ENCODE measurements at regions of chr5 and their contacts with region 1.

Region 1: GRCh38 chr5:149990518-149991376 is 9.7 kb downstream of the TIGD6 start:
- DNase-seq: peak; percentile 81 to 82
- ATAC-seq: peak; percentile 87 to 93
- H3K4me3 ChIP-seq: no peak overlapping the region
- H3K27ac ChIP-seq: no peak overlapping the region
- H3K4me1 ChIP-seq: no peaks in the 10 kb centered on the region
- CTCF ChIP-seq: peak; percentile 98
- EP300 ChIP-seq: no peak
- POLR2A ChIP-seq: no peak
- RAD21 ChIP-seq: peak; percentile 93 to 99

Region 2: DNA sequence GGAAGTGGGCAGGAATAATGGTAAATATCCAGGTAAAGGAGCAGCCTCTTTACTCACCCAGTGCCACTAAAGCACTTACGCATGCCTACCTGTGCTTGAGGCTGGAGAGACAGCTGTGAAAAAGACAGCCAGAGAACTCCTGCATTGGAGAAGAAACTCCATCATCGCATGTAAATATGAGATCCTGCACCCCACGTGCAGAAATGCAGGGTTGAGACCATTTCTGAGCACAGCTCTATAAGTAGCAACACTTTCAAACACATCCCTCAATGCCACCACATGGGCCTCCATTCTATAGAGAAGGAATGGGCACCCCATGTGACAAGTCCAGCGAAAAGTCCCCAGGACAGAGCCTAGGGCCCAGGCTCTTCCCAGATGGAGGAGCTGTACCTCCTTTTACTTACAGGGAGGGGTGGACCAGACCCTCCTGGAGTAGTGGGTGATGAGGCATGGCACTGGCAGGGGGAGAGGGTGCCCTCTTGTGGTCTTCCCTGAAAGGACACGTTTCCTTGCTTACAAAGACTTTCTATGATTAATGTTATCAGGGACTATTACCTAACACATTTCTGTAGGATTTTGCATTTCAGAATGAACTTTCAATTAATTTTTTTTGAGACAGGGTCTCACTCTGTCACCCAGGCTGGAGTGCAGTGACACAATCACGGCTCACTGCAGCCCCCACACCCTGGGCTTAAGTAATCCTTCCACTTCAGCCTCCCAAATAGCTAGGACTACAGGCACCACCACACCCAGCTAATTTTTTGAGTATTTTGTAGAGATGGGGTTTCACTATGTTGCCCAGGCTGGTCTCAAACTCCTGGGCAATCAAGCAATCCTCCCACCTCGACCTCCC is 556.4 kb before region 1 on chr5:
- CTCF ChIA-PET with region 1: no interaction called
- POLR2A ChIA-PET with region 1: no interaction called
- DNase-seq: peak; percentile 61 to 88
- ATAC-seq: peak; percentile 56 to 72
- H3K4me3 ChIP-seq: no peak overlapping the region
- H3K27ac ChIP-seq: 0 out of 6 replicates have a peak overlapping the region, but pooled peaks of 1 of the 2 experiments have one; percentile 9
- H3K4me1 ChIP-seq: peaks cover 13% of the 10 kb centered on the region
- CTCF ChIP-seq: peak; percentile 86
- EP300 ChIP-seq: no peak
- POLR2A ChIP-seq: no peak
- RAD21 ChIP-seq: peak; percentile 74

Region 3: GRCh38 chr5:149775785-149776184 is 215.0 kb before region 1 on chr5:
- CTCF ChIA-PET with region 1: interaction called, 11 read pairs
- POLR2A ChIA-PET with region 1: no interaction called
- DNase-seq: peak; percentile 40 to 73
- ATAC-seq: peak; percentile 79 to 87; a peak in 4 of 6 replicates
- H3K4me3 ChIP-seq: no peak overlapping the region
- H3K27ac ChIP-seq: no peak overlapping the region
- H3K4me1 ChIP-seq: no peaks in the 10 kb centered on the region
- CTCF ChIP-seq: peak; percentile 54
- EP300 ChIP-seq: no peak
- POLR2A ChIP-seq: no peak
- RAD21 ChIP-seq: peak; percentile 36 to 55; a peak in 3 of 5 replicates

Region 4: DNA sequence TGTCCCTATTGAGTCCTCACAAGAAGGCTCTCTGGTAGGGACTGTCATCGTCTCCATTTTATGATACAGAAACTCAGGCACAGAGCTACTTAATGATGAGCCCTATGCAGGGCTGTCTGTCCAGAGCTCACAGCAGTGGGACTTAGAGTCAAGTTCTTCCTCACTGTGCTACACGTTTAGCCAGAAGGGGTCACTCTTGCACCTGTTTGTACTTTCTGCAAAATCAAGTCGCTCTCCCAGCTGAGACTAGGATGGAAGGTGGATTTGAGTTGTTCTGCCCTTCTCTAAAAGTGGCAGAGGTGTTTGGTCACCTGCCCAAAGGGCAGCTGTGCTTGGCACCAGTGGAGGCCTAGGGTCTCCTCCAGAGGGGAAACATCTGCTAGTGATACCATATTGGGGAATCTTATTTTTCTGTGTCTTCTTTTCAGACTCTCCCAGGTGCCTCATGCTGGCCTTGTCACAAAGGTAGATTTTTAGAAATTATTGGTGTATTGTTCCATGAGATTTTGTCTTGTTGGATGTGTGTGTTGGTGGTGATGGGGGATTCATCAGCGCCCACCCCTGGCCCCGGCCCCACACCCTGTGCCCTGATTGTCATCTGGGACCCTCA is 156.4 kb before region 1 on chr5:
- CTCF ChIA-PET with region 1: interaction called, 507 read pairs
- POLR2A ChIA-PET with region 1: interaction called, 3 read pairs
- DNase-seq: peak; percentile 87 to 90
- ATAC-seq: peak; percentile 67 to 77
- H3K4me3 ChIP-seq: no peak overlapping the region
- H3K27ac ChIP-seq: no peak overlapping the region
- H3K4me1 ChIP-seq: peaks cover 16% of the 10 kb centered on the region
- CTCF ChIP-seq: peak; percentile 91
- EP300 ChIP-seq: no peak
- POLR2A ChIP-seq: no peak
- RAD21 ChIP-seq: peak; percentile 83 to 90

Region 5: DNA sequence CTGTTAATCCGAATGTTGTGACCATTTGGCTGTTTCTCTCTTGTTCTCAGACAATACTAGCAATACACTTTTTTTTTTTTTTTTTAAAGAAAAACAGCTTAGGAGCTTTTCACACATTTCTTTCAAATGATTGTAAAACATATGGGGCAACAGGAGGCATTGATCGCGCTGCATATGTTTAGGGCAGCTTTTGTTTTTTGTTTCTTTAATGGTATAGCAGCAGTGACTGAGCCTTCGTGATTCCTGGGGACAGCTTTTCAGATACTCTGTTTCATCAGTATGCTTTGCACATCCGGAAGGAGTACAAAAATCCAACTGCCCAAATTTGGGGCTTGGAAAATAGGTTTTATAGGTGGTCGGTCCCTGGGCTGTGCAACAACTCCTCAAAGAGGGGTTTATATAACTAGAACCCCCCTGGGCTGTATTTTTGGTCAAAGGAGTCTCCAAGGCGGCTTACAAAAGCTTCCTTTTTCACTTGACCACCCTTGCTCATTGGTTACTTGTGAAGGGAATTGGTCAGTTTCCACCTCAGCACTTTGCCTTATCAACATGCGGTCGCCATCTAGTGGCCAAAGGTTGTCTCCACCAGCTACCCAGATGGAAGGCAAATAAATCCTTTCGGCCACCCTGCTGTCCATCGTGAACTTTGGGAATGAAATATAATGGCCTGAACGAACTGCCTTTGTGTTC is 138.0 kb before region 1 on chr5:
- CTCF ChIA-PET with region 1: interaction called, 72 read pairs
- POLR2A ChIA-PET with region 1: no interaction called
- DNase-seq: peak; percentile 76 to 77
- ATAC-seq: peak; percentile 86 to 94
- H3K4me3 ChIP-seq: no peak overlapping the region
- H3K27ac ChIP-seq: peak overlapping the region; percentile 34 to 42; a peak in 2 of 6 replicates
- H3K4me1 ChIP-seq: peaks cover 13% of the 10 kb centered on the region
- CTCF ChIP-seq: peak; percentile 89
- EP300 ChIP-seq: no peak
- POLR2A ChIP-seq: no peak
- RAD21 ChIP-seq: peak; percentile 62 to 70

Region 6: GRCh38 chr5:149960272-149961185 is 30.2 kb before region 1 on chr5 and contains the start of gene SLC26A2:
- CTCF ChIA-PET with region 1: interaction called, 122 read pairs
- POLR2A ChIA-PET with region 1: interaction called, 6 read pairs
- DNase-seq: peak; percentile 96 to 98
- ATAC-seq: peak; percentile 89 to 94
- H3K4me3 ChIP-seq: peak within 1 kb of the TSS; percentile 81
- H3K27ac ChIP-seq: peak within 1 kb of the TSS; percentile 91 to 96
- H3K4me1 ChIP-seq: peaks cover 48% of the 10 kb centered on the region
- CTCF ChIP-seq: no peak
- EP300 ChIP-seq: no peak
- POLR2A ChIP-seq: peak; percentile 96
- RAD21 ChIP-seq: no peak
- polyA plus RNA-seq, gene SLC26A2: 23.2 and 31.9 TPM in 2 replicates

Region 7: GRCh38 chr5:150006318-150006717 is 15.6 kb after region 1 on chr5:
- CTCF ChIA-PET with region 1: interaction called, 20 read pairs
- POLR2A ChIA-PET with region 1: no interaction called
- DNase-seq: no peak
- ATAC-seq: no peak
- H3K4me3 ChIP-seq: no peak overlapping the region
- H3K27ac ChIP-seq: no peak overlapping the region
- H3K4me1 ChIP-seq: peaks cover 13% of the 10 kb centered on the region
- CTCF ChIP-seq: no peak
- EP300 ChIP-seq: no peak
- POLR2A ChIP-seq: no peak
- RAD21 ChIP-seq: no peak

Region 8: DNA sequence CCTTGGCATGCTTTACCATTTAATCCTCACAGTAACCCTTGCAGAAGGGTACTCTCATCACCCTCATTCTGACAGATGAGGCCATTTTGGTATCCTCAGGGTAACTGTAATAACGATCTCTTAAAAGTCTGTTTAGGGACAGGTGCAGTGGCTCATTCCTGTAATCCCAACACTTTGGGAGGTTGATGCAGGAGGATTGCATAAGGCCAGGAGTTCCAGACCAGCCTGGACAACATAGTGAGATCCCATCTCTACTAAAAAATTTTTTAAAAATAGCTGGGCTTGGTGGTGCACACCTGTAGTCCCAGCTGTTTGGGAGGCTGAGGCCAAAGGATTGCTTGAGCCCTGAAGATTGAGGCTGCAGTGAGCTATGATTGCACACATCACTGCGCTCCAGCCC is 63.8 kb after region 1 on chr5:
- CTCF ChIA-PET with region 1: no interaction called
- POLR2A ChIA-PET with region 1: no interaction called
- DNase-seq: no peak
- ATAC-seq: no peak
- H3K4me3 ChIP-seq: no peak overlapping the region
- H3K27ac ChIP-seq: no peak overlapping the region
- H3K4me1 ChIP-seq: peaks cover 7% of the 10 kb centered on the region
- CTCF ChIP-seq: no peak
- EP300 ChIP-seq: no peak
- POLR2A ChIP-seq: no peak
- RAD21 ChIP-seq: no peak

Region 9: GRCh38 chr5:150560401-150561193 is 569.9 kb after region 1 on chr5:
- CTCF ChIA-PET with region 1: no interaction called
- POLR2A ChIA-PET with region 1: no interaction called
- DNase-seq: peak; percentile 83 to 92
- ATAC-seq: peak; percentile 72 to 85
- H3K4me3 ChIP-seq: no peak overlapping the region
- H3K27ac ChIP-seq: peak overlapping the region; percentile 66 to 80
- H3K4me1 ChIP-seq: peaks cover 19% of the 10 kb centered on the region
- CTCF ChIP-seq: peak; percentile 93
- EP300 ChIP-seq: no peak
- POLR2A ChIP-seq: no peak
- RAD21 ChIP-seq: peak; percentile 94 to 95